Naive thymus-derived CD8-positive, alpha-beta T cell (primary cell): ENCODE measurements at regions of chr16 and their contacts with region 1.

Region 1: GRCh38 chr16:2009789-2010510 is at the start of gene ZNF598:
- DNase-seq: peak; percentile 59 to 89 (median 78)
- ATAC-seq: peak; percentile 88 to 92
- H3K4me3 Mint-ChIP-seq: peak within 1 kb of the TSS; percentile 78 to 94 (median 91)
- H3K27ac Mint-ChIP-seq: peak within 1 kb of the TSS; percentile 75 to 98 (median 98)
- H3K4me1 Mint-ChIP-seq: peaks cover 24 to 47% (median 41%) of the 10 kb centered on the region in 4 donors
- H3K27me3 Mint-ChIP-seq: no peaks in the 10 kb centered on the region
- polyA plus RNA-seq, gene ZNF598: 3.4 to 10.0 (median 3.6) TPM

Region 2: GRCh38 chr16:1942810-1943726 is 66.9 kb before region 1 on chr16 and contains the start of gene MSRB1:
- POLR2A ChIA-PET with region 1: no interaction called
- DNase-seq: peak; percentile 97 to 100 (median 98)
- ATAC-seq: peak; percentile 97 to 99
- H3K4me3 Mint-ChIP-seq: peak within 1 kb of the TSS; percentile 78 to 92 (median 86)
- H3K27ac Mint-ChIP-seq: peak within 1 kb of the TSS; percentile 46 to 88 (median 76)
- H3K4me1 Mint-ChIP-seq: peaks cover 0 to 24% (median 15%) of the 10 kb centered on the region in 4 donors
- H3K27me3 Mint-ChIP-seq: no peaks in the 10 kb centered on the region
- polyA plus RNA-seq, gene MSRB1: 13.9 to 19.1 (median 16.2) TPM

Region 3: GRCh38 chr16:1991948-1992703 is 17.8 kb before region 1 on chr16:
- POLR2A ChIA-PET with region 1: interaction called, 21 read pairs
- DNase-seq: peak; percentile 86 to 100 (median 95)
- ATAC-seq: peak; percentile 72 to 82
- H3K4me3 Mint-ChIP-seq: peak overlapping the region in 9 of 10 donors; percentile 15 to 84 (median 71)
- H3K27ac Mint-ChIP-seq: peak overlapping the region in 6 of 10 donors; percentile 24 to 83 (median 72)
- H3K4me1 Mint-ChIP-seq: peaks cover 9 to 27% (median 18%) of the 10 kb centered on the region in 4 donors
- H3K27me3 Mint-ChIP-seq: peaks cover 2 to 27% (median 7%) of the 10 kb centered on the region in 5 donors

Region 4: GRCh38 chr16:2071454-2072202 is 61.7 kb after region 1 on chr16:
- POLR2A ChIA-PET with region 1: no interaction called
- DNase-seq: no peak
- ATAC-seq: no peak
- H3K4me3 Mint-ChIP-seq: no peak overlapping the region
- H3K27ac Mint-ChIP-seq: no peak overlapping the region
- H3K4me1 Mint-ChIP-seq: no peaks in the 10 kb centered on the region
- H3K27me3 Mint-ChIP-seq: no peaks in the 10 kb centered on the region